ENCODE measurements at regions of chr10 and their contacts with region 1.

Region 1: DNA sequence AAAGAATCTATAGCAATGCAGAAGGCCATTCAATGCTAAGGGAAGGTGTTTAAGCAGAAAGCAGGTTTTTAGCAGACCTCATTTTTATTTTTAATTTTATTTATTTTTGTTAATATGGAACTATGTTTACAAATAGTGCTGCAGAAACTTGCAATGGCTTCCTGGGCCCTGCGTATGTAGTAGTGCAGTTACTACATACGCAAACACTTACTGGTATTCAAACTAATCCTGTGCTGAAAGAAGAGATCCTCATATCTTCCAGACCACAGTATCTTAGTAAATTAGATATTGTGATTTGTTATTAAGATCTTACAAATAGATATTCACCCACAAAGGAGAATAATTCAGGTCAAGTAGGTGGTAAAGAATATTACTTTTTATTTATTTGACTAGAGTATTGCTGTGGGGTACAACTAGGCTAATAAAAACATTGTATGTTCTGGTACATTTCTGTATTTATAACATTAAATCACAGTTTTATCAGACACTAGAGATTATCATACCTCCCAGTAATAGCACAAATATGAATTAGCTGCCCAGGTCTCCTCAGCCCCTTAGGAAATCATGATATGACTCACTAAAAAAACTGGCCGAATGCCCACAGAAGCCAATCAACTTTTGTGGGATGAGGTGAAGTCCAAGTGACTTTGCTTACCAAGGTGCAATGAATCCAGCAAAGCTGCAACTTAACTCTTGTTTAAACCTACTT is 57.6 kb downstream of the RNLS start:
- DNase-seq: no peak
- H3K4me3 ChIP-seq: no peak overlapping the region
- H3K4me1 ChIP-seq: peaks cover 15% of the 10 kb centered on the region
- H3K27me3 ChIP-seq: no peaks in the 10 kb centered on the region

Region 2: GRCh38 chr10:88401671-88402347 is 123.7 kb before region 1 on chr10:
- in situ Hi-C with region 1: loop called (anchors 25 kb)
- DNase-seq: peak in 1 of 2 experiments; percentile 41
- H3K4me3 ChIP-seq: no peak overlapping the region
- H3K4me1 ChIP-seq: no peaks in the 10 kb centered on the region; the same call in 1 of the 2 replicates
- H3K27me3 ChIP-seq: no peaks in the 10 kb centered on the region